Activated CD8-positive, alpha-beta T cell treated with anti-CD3 and anti-CD28 coated beads, Interleukin-2, amount 10 ng/mL, durations not matched to agents 7 days and 5 days (primary cell): ENCODE measurements at regions of chr14 and their contacts with region 1.

Region 1: DNA sequence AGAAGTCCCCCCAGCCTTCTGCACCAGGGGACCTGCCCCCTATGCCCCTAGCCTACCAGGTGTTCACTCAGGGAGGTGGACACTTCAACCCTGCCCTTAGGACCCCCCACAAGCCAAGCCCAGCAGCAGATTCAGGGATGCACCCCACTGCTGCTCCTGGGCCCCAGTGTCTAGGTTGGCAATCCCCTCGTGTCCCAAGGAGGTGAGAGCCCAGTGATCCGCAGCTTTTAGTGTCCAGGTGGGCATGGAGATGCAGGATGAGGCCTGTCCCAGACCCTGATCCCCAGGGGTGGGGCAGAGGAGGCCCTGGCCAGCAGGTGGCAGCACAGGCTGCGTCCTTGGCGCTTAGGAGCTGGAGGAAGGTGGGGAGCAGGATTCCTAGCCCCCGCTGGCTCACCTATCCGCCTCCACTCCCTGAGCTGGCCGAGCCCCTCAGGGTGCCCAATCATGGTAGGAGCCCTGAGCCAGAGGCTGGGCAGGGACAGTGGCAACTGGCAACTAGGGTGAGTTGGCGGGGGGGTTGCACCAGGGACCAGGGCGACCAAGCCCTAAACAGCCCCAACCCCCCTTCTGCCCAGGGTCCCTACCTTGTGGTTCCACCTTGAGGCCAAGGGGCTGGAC is 4.1 kb downstream of the CKB start:
- DNase-seq: peak; percentile 65
- ATAC-seq: peak; percentile 43
- H3K4me3 Mint-ChIP-seq: no peak overlapping the region
- H3K27ac Mint-ChIP-seq: no peak overlapping the region
- H3K4me1 Mint-ChIP-seq: peaks cover 18% of the 10 kb centered on the region
- H3K27me3 Mint-ChIP-seq: peaks cover 6% of the 10 kb centered on the region

Region 2: GRCh38 chr14:103500148-103500990 is 18.2 kb before region 1 on chr14:
- CTCF ChIA-PET with region 1: interaction called, 10 read pairs
- POLR2A ChIA-PET with region 1: no interaction called
- DNase-seq: peak; percentile 85
- ATAC-seq: peak; percentile 96
- H3K4me3 Mint-ChIP-seq: no peak overlapping the region
- H3K27ac Mint-ChIP-seq: no peak overlapping the region
- H3K4me1 Mint-ChIP-seq: no peaks in the 10 kb centered on the region
- H3K27me3 Mint-ChIP-seq: no peaks in the 10 kb centered on the region

Region 3: DNA sequence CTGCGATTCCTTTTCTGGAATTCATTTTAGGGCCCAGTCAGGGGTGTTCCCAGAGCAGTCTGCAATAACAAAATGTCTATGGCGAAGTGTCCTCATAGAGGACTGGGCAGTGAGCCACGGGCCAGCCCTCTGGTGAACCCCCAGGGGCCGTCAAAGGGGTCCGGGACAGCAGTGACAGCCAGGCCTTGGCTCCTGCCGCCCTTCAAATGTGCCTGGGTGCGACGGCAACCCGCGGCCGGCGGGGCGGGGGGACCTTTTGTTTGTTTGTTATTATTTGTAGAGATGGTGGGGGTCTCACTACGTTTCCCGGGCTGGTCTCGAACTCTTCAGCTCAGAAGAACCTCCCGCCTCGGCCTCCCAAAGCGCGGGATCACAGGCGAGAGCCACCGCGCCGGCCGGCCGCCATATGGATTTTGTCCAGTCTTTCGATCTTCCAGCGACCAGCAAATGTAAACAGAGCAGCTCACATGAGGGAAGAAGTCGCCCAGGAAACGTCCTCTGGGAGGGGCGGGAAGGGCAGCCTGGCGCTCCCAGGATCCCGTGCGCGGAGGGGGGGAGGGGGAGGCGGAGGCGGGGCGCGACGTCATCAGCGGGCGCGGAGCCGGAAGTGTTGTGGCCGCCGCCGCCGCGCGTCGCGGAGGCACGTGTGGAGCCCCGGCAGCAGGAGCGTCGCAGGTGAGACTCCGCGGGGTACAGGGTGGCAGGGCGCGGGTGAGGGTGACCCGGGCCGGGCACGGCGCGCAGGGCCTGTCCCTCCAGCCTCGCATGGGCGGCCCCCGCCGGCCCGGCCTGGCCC is 10.3 kb after region 1 on chr14 and contains the start of gene TRMT61A:
- CTCF ChIA-PET with region 1: interaction called, 15 read pairs
- POLR2A ChIA-PET with region 1: no interaction called
- DNase-seq: peak; percentile 81
- ATAC-seq: peak; percentile 89
- H3K4me3 Mint-ChIP-seq: peak within 1 kb of the TSS; percentile 95
- H3K27ac Mint-ChIP-seq: peak within 1 kb of the TSS; percentile 97
- H3K4me1 Mint-ChIP-seq: peaks cover 46% of the 10 kb centered on the region
- H3K27me3 Mint-ChIP-seq: peaks cover 4% of the 10 kb centered on the region
- total RNA-seq, gene TRMT61A: 8.5 to 8.8 TPM

Region 4: DNA sequence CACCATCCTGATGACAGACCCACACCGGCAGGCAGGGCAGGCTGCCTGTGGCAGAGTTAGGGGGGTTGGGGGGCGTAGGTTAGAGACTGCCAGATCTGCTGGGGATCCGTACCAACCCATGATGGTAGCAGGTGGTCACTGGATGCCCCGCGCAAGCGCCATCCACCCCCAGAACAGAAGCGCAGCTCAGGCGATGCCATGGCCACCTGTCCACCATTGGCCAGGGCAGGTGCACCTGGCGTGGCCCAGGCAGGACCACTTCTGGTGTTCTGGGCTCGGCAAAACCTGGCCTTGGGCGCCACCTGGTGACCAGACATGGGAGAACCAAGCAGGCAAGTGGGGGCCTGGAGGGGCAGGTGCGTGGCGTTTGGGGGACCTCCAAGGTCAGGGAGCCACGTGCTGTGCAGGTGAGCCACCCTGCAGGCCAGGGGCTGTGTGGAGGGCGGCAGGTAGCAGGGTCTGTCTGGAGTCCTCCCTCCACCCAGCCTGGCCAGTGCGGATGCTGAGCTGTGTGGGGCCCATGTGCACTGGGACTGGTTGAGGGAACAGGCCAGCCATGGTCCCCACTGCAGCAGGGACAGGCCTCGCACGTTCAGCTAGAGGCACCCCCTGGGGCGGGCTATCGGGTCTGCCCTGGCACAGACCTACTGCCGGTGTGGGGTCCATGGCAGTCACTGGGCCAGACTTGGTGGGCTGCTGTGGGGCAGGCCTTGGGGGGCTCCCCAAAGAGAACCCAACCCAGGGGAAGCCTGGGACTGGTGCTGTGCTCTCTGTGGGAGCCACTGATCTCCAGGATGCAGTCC is 28.3 kb after region 1 on chr14:
- CTCF ChIA-PET with region 1: interaction called, 14 read pairs
- POLR2A ChIA-PET with region 1: no interaction called
- DNase-seq: peak; percentile 83
- ATAC-seq: peak; percentile 71
- H3K4me3 Mint-ChIP-seq: no peak overlapping the region
- H3K27ac Mint-ChIP-seq: no peak overlapping the region
- H3K4me1 Mint-ChIP-seq: no peaks in the 10 kb centered on the region
- H3K27me3 Mint-ChIP-seq: no peaks in the 10 kb centered on the region

Region 5: DNA sequence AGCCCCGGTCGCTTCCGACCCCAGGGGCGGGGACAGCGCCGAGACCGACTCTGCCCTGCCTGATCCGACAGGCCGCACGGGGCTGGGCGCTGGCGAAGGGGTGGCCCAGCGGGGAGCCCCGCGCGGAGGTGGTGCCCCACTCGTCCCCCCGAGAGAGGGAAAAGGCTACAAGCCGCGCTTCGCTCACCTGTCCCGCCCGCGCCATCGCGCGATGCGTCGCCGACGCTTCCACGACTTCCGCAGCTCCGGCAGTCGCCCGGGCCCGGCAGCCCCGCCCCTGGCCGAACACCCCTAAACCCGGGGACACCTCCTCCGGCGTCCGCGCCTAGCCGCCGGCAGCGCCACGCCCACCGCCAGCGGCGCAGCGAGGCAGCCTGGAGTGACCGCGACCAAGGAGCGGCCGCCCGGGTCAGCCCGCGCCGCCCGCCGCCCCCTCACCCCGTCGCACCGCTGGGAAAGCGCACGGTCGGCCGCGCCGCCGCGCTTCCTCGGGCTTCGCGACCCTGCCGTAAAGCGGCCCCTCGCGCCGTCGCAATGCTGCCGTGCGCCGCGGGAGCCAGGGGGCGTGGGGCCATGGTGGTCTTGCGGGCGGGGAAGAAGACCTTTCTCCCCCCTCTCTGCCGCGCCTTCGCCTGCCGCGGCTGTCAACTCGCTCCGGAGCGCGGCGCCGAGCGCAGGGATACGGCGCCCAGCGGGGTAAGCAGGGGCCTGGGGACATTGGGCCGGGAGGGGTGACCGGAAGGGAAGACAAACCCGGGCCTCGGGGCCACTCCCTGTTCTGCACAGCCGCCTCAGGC is 44.1 kb after region 1 on chr14 and contains the starts of genes BAG5 and COA8:
- CTCF ChIA-PET with region 1: interaction called, 23 read pairs
- POLR2A ChIA-PET with region 1: interaction called, 4 read pairs
- DNase-seq: peak; percentile 90
- ATAC-seq: peak; percentile 81
- H3K4me3 Mint-ChIP-seq: peak within 1 kb of the TSS; percentile 91
- H3K27ac Mint-ChIP-seq: peak within 1 kb of the TSS; percentile 93
- H3K4me1 Mint-ChIP-seq: peaks cover 55% of the 10 kb centered on the region
- H3K27me3 Mint-ChIP-seq: no peaks in the 10 kb centered on the region
- total RNA-seq, gene BAG5: 31.1 to 33.2 TPM
- total RNA-seq, gene COA8: 28.3 to 34.3 TPM